PC-9 (cell line): ENCODE measurements at regions of chr14 and their contacts with region 1.

Region 1: GRCh38 chr14:76918751-76919543 is 92.7 kb downstream of the LRRC74A start:
- DNase-seq: peak; percentile 98 to 100
- H3K4me3 ChIP-seq: peak overlapping the region; percentile 20; the same call in 1 of the 2 replicates
- H3K27ac ChIP-seq: peak overlapping the region; percentile 91
- H3K4me1 ChIP-seq: peaks cover 79% of the 10 kb centered on the region
- H3K27me3 ChIP-seq: no peaks in the 10 kb centered on the region
- CTCF ChIP-seq: peak; percentile 43; the same call in 1 of the 2 replicates

Region 2: DNA sequence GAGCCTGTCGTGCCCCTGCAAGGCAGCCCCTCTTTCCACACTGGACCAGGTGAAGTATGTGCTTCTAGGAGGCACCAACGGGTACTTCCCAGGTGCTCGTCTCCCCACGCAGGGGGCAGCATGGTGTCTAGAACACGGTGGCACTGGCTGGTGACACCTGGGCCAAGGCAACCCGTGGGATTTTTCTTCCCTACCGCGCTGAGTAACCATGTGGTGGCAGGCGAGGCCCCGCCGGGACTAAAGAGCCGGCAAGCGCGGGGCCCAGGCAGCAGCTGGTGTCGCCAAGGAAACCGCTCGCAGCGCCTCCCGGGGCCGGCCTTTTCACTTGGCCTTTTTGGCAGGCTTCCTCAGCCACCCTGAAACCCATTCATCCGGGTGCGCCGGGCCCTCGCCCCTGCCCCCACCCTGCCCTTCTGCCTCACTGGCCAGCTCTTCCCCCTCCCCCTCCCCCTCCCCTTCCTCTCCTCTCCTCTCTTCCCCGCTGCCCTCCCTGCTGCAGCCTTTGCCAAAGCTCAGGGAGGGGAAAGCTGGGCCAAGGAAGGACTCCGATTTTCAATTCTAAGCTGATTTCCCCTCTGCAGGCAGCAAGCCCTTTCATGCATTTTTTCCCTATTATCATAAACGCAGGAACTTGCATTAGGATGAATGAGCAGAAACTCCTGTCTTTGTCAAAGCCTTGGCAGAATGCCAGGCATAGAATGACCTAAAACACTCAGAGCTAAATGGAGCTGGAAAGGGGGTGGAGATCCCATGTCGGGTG is 28.3 kb after region 1 on chr14:
- CTCF ChIA-PET with region 1: interaction called, 24 read pairs
- POLR2A ChIA-PET with region 1: interaction called, 29 read pairs
- intact Hi-C with region 1: loop called (anchors 1 kb)
- DNase-seq: peak; percentile 95 to 100
- H3K4me3 ChIP-seq: peak overlapping the region; percentile 15; the same call in 1 of the 2 replicates
- H3K27ac ChIP-seq: peak overlapping the region; percentile 93
- H3K4me1 ChIP-seq: peaks cover 81% of the 10 kb centered on the region
- H3K27me3 ChIP-seq: no peaks in the 10 kb centered on the region
- CTCF ChIP-seq: peak; percentile 59; the same call in 1 of the 2 replicates

Region 3: GRCh38 chr14:77007975-77008421 is 89.1 kb after region 1 on chr14:
- CTCF ChIA-PET with region 1: interaction called, 10 read pairs
- POLR2A ChIA-PET with region 1: no interaction called
- intact Hi-C with region 1: loop called (anchors 1 kb)
- DNase-seq: peak; percentile 95 to 99
- H3K4me3 ChIP-seq: peak overlapping the region; percentile 33; the same call in 1 of the 2 replicates
- H3K27ac ChIP-seq: peak overlapping the region; percentile 77
- H3K4me1 ChIP-seq: peaks cover 89% of the 10 kb centered on the region
- H3K27me3 ChIP-seq: no peaks in the 10 kb centered on the region
- CTCF ChIP-seq: no peak

Region 4: GRCh38 chr14:77033622-77034521 is 114.9 kb after region 1 on chr14:
- CTCF ChIA-PET with region 1: interaction called, 7 read pairs
- POLR2A ChIA-PET with region 1: interaction called, 17 read pairs
- intact Hi-C with region 1: loop called (anchors 2 kb)
- DNase-seq: peak; percentile 94
- H3K4me3 ChIP-seq: peak overlapping the region; percentile 56
- H3K27ac ChIP-seq: peak overlapping the region; percentile 93
- H3K4me1 ChIP-seq: peaks cover 92% of the 10 kb centered on the region
- H3K27me3 ChIP-seq: no peaks in the 10 kb centered on the region
- CTCF ChIP-seq: peak; percentile 17; the same call in 1 of the 2 replicates

Region 5: DNA sequence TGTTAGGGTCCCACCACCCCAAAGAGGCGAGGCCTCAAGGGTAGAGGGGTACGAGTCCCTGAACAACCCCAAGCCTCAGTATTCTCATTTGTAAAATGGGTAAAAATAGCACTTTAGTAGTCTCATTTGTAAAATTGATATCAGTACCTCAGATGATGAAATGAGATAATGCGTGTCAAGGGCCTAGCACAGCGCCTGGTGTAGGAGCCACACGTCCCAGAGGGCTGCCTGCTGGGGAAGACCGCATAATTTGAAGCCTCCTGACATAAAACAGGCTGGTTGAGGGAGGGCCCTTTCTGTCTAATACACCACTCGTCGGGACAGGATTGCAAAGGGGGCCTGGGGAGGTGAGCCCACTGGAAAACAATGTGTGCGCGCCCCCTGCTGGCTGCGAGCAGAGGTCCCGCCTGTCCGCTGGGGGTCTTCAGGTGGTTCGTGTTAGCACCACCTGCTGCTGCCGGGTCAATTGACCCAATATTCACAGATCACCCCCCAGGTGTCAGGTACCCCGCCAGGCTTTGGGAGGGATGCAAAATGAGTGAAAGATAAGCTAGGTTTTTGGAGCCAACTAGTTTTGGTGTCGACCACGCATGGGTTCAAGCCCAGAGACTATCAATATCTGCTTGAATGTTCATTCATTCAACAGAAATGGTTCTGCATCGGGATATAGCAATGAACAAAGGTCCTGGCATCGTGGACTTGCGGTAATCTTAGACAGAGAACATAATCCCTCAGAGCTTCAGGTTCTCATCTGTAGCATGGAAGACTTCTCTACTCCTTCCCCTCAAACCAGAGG is 134.3 kb after region 1 on chr14:
- CTCF ChIA-PET with region 1: interaction called, 20 read pairs
- POLR2A ChIA-PET with region 1: no interaction called
- intact Hi-C with region 1: no loop called
- DNase-seq: no peak
- H3K4me3 ChIP-seq: no peak overlapping the region
- H3K27ac ChIP-seq: no peak overlapping the region
- H3K4me1 ChIP-seq: peaks cover 8% of the 10 kb centered on the region; the same call in 1 of the 2 replicates
- H3K27me3 ChIP-seq: no peaks in the 10 kb centered on the region
- CTCF ChIP-seq: no peak

Region 6: DNA sequence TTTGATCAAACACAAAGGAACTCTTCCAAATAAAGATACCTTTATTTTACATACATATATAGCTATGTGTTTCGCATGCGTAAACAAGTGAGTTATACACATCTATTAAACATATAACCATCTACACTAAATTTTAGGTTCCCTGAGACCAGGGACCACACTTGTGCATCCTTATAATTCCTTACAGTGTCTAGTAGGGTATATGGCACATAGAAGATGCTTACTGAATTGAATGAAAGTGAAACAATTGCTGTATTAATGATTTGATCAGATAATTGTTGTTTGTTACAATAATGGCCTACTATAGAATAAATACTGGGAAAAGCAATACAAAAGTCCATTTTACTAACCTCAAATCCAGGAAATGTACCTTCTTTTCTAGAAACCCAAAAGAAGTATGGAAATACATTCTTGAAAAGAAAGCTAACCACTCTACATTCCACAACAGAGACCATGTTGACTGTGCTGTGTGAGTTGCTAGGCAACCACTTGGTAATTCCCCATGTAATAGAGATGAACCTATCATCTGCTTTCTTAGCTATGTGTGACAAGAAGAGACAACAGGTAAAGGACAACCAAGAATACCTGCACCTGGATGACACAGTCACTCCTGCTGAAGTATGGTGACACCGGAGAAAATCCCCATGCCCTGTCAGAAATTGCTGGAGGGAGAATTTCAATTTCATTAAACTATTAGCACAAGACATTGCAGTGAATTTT is 167.2 kb after region 1 on chr14:
- CTCF ChIA-PET with region 1: interaction called, 7 read pairs
- POLR2A ChIA-PET with region 1: interaction called, 35 read pairs
- intact Hi-C with region 1: loop called (anchors 1 kb)
- DNase-seq: peak; percentile 58 to 86
- H3K4me3 ChIP-seq: no peak overlapping the region
- H3K27ac ChIP-seq: no peak overlapping the region
- H3K4me1 ChIP-seq: peaks cover 38% of the 10 kb centered on the region
- H3K27me3 ChIP-seq: no peaks in the 10 kb centered on the region
- CTCF ChIP-seq: no peak

Region 7: DNA sequence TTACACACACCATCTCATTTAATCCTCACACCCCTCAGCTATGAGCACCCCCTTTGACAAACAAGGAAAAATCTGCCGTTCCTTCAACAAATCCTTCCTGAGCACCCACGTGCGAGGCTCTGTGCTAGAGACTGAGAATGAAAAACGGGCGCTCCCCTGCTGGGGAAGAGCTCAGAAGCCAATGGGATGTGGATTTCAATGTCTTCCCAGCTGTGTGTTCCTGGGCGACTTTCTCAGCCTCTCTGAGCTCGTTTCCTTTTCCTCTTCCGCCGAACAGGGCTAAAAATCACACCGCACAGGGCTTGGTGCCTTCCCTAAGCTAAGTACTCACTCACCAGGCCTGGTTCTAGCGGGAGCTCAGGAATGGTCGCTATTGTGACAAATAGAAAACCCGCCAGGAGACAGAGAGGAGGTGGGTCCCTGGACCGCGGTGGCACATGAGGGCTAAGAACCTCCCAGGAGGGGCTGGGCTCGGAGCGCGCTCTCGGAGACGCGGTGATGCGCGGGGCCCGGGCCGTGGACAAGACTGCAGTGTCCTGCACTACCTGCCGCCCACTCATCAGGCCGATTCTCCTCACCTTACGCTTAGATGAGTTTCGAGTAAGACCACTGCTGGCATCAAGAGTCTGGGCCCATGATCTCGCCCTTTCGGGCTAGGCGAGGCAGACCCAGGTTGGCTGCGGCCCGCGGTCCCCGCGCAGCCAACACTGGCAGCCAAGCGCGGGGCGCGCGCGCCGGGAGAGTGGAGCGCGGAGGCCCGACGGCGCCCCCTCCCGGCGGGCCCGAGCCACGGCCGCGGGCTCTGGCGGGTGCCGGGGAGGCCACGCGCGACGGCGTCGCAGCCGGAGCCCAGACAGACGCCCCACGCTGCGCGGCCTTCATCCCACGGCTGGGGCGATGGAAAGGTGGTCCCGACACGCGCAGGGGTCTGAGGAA is 205.7 kb after region 1 on chr14:
- CTCF ChIA-PET with region 1: interaction called, 11 read pairs
- POLR2A ChIA-PET with region 1: no interaction called
- intact Hi-C with region 1: no loop called
- DNase-seq: peak in 1 of 2 experiments; percentile 81
- H3K4me3 ChIP-seq: peak overlapping the region; percentile 31; the same call in 1 of the 2 replicates
- H3K27ac ChIP-seq: no peak overlapping the region
- H3K4me1 ChIP-seq: peaks cover 26% of the 10 kb centered on the region
- H3K27me3 ChIP-seq: peaks cover 51% of the 10 kb centered on the region
- CTCF ChIP-seq: peak; percentile 28; the same call in 1 of the 2 replicates

Region 8: DNA sequence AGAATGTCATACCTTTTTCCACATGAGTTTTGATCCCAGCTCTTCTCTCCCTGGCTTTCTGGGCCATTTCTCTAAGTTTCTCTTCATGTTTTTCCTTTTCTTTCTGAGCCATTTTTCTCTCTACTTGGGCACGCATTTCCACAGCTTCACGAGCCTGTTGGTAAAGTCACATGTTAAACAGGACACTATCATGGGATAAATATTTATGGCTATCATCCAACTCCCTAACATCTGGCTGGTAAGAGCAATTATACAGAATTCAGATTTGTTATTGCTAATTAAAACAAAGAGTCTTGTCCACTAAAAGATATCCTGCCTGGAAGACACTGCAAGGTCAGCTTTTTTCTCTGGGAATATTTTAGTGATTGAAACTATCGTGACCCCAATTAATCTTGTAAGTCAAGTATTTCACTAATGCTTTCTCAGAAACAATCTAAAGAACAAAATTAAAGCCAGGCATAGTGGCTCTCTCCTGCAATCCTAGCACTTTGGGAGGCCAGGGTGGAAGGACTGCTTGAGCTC is 812.1 kb after region 1 on chr14:
- CTCF ChIA-PET with region 1: no interaction called
- POLR2A ChIA-PET with region 1: no interaction called
- intact Hi-C with region 1: no loop called
- DNase-seq: no peak
- H3K4me3 ChIP-seq: no peak overlapping the region
- H3K27ac ChIP-seq: no peak overlapping the region
- H3K4me1 ChIP-seq: no peaks in the 10 kb centered on the region
- H3K27me3 ChIP-seq: no peaks in the 10 kb centered on the region
- CTCF ChIP-seq: no peak